CD14-positive monocyte (primary cell): ENCODE measurements at regions of chr10 and their contacts with region 1.

Region 1: DNA sequence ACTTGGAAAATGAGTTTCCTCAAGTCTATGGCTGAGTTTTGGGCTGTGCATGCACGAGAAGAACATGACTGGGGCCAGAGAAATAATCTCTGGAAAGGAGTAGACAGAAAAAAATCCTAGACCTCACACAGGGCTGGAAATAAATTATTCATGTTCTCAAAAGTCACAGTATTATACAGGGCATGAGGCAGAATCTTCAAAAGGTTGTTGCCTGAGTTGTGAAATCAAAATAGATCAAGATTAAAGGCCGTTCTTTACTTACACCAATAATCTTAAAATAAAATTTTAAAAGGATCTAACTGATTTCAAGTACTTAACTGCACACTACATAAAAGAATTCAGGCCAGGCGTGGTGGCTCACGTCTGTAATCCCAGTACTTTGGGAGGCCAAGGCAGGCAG is 14.1 kb upstream of the CREM start:
- DNase-seq: no peak
- H3K4me3 ChIP-seq: no peak overlapping the region
- H3K4me3 Mint-ChIP-seq: no peak overlapping the region
- H3K27ac ChIP-seq: no peak overlapping the region
- H3K27ac Mint-ChIP-seq: peak overlapping the region in 1 of 7 donors; percentile 16
- H3K4me1 ChIP-seq: no peaks in the 10 kb centered on the region
- H3K4me1 Mint-ChIP-seq: no peaks in the 10 kb centered on the region
- H3K27me3 ChIP-seq: peaks cover 5 to 6% of the 10 kb centered on the region in 2 donors
- H3K27me3 Mint-ChIP-seq: peaks cover 9 to 15% (median 10%) of the 10 kb centered on the region in 3 donors
- CTCF ChIP-seq: no peak

Region 2: GRCh38 chr10:35554461-35555056 is 442.0 kb after region 1 on chr10:
- intact Hi-C with region 1: loop called in 1 of 2 experiments (anchors 10 kb)
- DNase-seq: no peak
- H3K4me3 ChIP-seq: no peak overlapping the region
- H3K4me3 Mint-ChIP-seq: no peak overlapping the region
- H3K27ac ChIP-seq: no peak overlapping the region
- H3K27ac Mint-ChIP-seq: peak overlapping the region in 2 of 7 donors; percentile 5 to 52
- H3K4me1 ChIP-seq: no peaks in the 10 kb centered on the region
- H3K4me1 Mint-ChIP-seq: peaks cover 2% of the 10 kb centered on the region
- H3K27me3 ChIP-seq: no peaks in the 10 kb centered on the region
- H3K27me3 Mint-ChIP-seq: no peaks in the 10 kb centered on the region
- CTCF ChIP-seq: no peak